ENCODE measurements at regions of chr2 and their contacts with region 1.

Region 1: GRCh38 chr2:161243905-161244304 is 64.3 kb upstream of the PSMD14 start:
- DNase-seq: peak in 3 of 9 donors; percentile 18 to 22 (median 18)
- ATAC-seq: no peak
- H3K4me3 ChIP-seq: peak overlapping the region; percentile 61
- H3K4me3 Mint-ChIP-seq: peak overlapping the region; percentile 82 to 98 (median 92)
- H3K27ac ChIP-seq: peak overlapping the region; percentile 83
- H3K27ac Mint-ChIP-seq: peak overlapping the region; percentile 88 to 96 (median 94)
- H3K4me1 ChIP-seq: peaks cover 15 to 25% of the 10 kb centered on the region in 2 donors
- H3K4me1 Mint-ChIP-seq: peaks cover 15 to 73% (median 65%) of the 10 kb centered on the region in 7 donors
- H3K27me3 ChIP-seq: no peaks in the 10 kb centered on the region
- H3K27me3 Mint-ChIP-seq: no peaks in the 10 kb centered on the region

Region 2: GRCh38 chr2:161273038-161273760 is 29.3 kb after region 1 on chr2:
- CTCF ChIA-PET with region 1: no interaction called
- POLR2A ChIA-PET with region 1: no interaction called
- intact Hi-C with region 1: loop called (anchors 2 kb)
- DNase-seq: peak in 7 of 9 donors; percentile 26 to 65 (median 58)
- ATAC-seq: peak; percentile 80
- H3K4me3 ChIP-seq: no peak overlapping the region
- H3K4me3 Mint-ChIP-seq: no peak overlapping the region
- H3K27ac ChIP-seq: no peak overlapping the region
- H3K27ac Mint-ChIP-seq: no peak overlapping the region
- H3K4me1 ChIP-seq: no peaks in the 10 kb centered on the region
- H3K4me1 Mint-ChIP-seq: peaks cover 0 to 3% (median 0%) of the 10 kb centered on the region in 7 donors
- H3K27me3 ChIP-seq: no peaks in the 10 kb centered on the region
- H3K27me3 Mint-ChIP-seq: peaks cover 4 to 27% (median 5%) of the 10 kb centered on the region in 5 donors

Region 3: GRCh38 chr2:161283926-161284325 is 40.0 kb after region 1 on chr2:
- CTCF ChIA-PET with region 1: no interaction called
- POLR2A ChIA-PET with region 1: no interaction called
- intact Hi-C with region 1: no loop called
- DNase-seq: no peak
- ATAC-seq: no peak
- H3K4me3 ChIP-seq: no peak overlapping the region
- H3K4me3 Mint-ChIP-seq: no peak overlapping the region
- H3K27ac ChIP-seq: no peak overlapping the region
- H3K27ac Mint-ChIP-seq: no peak overlapping the region
- H3K4me1 ChIP-seq: no peaks in the 10 kb centered on the region
- H3K4me1 Mint-ChIP-seq: peaks cover 0 to 3% (median 0%) of the 10 kb centered on the region in 7 donors
- H3K27me3 ChIP-seq: peaks cover 0 to 7% of the 10 kb centered on the region in 2 donors
- H3K27me3 Mint-ChIP-seq: peaks cover 25 to 53% (median 28%) of the 10 kb centered on the region in 5 donors